Caco-2 (cell line): ENCODE measurements at regions of chr9 and their contacts with region 1.

Region 1: GRCh38 chr9:35657546-35658136 is at the start of gene RMRP:
- DNase-seq: peak; percentile 98 to 100
- H3K4me3 ChIP-seq: peak within 1 kb of the TSS; percentile 95
- H3K4me3 Mint-ChIP-seq: peak within 1 kb of the TSS; percentile 76
- H3K27ac Mint-ChIP-seq: peak within 1 kb of the TSS; percentile 82
- H3K4me1 ChIP-seq: 0 out of 2 replicates have a peak, but pooled peaks cover 5% of the 10 kb centered on the region
- H3K4me1 Mint-ChIP-seq: peaks cover 12% of the 10 kb centered on the region
- H3K27me3 ChIP-seq: no peaks in the 10 kb centered on the region
- H3K27me3 Mint-ChIP-seq: peaks cover 3% of the 10 kb centered on the region
- CTCF ChIP-seq: peak; percentile 15 to 21
- total RNA-seq, gene RMRP: 10,161 and 10,726 TPM in 2 replicates

Region 2: GRCh38 chr9:35603987-35604577 is 53.6 kb before region 1 on chr9:
- CTCF ChIA-PET with region 1: interaction called, 9 read pairs
- POLR2A ChIA-PET with region 1: interaction called, 10 read pairs
- intact Hi-C with region 1: no loop called
- DNase-seq: peak; percentile 99 to 100
- H3K4me3 ChIP-seq: peak overlapping the region; percentile 92
- H3K4me3 Mint-ChIP-seq: peak overlapping the region; percentile 99
- H3K27ac Mint-ChIP-seq: peak overlapping the region; percentile 99
- H3K4me1 ChIP-seq: peaks cover 16% of the 10 kb centered on the region
- H3K4me1 Mint-ChIP-seq: peaks cover 23% of the 10 kb centered on the region
- H3K27me3 ChIP-seq: no peaks in the 10 kb centered on the region
- H3K27me3 Mint-ChIP-seq: no peaks in the 10 kb centered on the region
- CTCF ChIP-seq: peak; percentile 78 to 83

Region 3: DNA sequence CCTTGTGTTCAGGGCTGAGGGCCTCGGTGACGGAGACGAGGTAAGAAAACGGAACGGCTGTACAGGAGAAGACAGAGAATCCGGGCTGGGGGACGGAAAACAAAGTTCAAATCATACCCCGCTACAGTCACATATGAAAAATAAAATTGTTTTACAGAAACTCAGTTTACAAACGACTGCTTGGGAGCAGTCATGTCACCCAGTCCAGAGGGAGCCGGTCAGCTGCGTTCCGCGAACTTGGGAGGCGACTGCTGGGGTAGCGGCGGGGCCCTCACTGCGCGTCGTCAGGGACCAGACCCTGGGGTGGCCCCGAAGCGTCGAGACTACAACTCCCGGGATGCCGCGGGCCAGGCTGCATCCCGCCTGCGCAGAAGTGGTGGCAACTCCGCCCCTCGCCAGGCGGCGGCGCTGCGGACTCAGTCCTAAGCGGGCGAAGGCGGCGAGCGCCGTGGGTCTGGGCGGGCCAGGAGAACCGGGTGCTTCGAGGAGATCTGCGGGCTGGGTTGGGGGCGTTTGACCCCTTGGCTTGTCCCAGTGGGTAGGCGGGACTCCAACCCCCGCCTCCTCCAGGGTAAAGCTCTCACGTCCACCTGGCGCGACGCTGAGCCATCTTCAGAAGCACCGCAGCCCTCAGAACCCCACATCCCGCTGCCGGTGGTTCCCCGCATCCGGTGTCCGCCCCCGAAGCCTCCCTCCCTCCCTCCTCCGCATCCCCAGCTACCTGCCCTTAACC is 10.9 kb before region 1 on chr9:
- CTCF ChIA-PET with region 1: interaction called, 31 read pairs
- POLR2A ChIA-PET with region 1: interaction called, 35 read pairs
- intact Hi-C with region 1: loop called (anchors 1 kb)
- DNase-seq: peak; percentile 90 to 97
- H3K4me3 ChIP-seq: peak overlapping the region; percentile 46
- H3K4me3 Mint-ChIP-seq: peak overlapping the region; percentile 81
- H3K27ac Mint-ChIP-seq: peak overlapping the region; percentile 84
- H3K4me1 ChIP-seq: no peaks in the 10 kb centered on the region; the same call in 1 of the 2 replicates
- H3K4me1 Mint-ChIP-seq: peaks cover 10% of the 10 kb centered on the region
- H3K27me3 ChIP-seq: no peaks in the 10 kb centered on the region
- H3K27me3 Mint-ChIP-seq: no peaks in the 10 kb centered on the region
- CTCF ChIP-seq: peak; percentile 93 to 94

Region 4: DNA sequence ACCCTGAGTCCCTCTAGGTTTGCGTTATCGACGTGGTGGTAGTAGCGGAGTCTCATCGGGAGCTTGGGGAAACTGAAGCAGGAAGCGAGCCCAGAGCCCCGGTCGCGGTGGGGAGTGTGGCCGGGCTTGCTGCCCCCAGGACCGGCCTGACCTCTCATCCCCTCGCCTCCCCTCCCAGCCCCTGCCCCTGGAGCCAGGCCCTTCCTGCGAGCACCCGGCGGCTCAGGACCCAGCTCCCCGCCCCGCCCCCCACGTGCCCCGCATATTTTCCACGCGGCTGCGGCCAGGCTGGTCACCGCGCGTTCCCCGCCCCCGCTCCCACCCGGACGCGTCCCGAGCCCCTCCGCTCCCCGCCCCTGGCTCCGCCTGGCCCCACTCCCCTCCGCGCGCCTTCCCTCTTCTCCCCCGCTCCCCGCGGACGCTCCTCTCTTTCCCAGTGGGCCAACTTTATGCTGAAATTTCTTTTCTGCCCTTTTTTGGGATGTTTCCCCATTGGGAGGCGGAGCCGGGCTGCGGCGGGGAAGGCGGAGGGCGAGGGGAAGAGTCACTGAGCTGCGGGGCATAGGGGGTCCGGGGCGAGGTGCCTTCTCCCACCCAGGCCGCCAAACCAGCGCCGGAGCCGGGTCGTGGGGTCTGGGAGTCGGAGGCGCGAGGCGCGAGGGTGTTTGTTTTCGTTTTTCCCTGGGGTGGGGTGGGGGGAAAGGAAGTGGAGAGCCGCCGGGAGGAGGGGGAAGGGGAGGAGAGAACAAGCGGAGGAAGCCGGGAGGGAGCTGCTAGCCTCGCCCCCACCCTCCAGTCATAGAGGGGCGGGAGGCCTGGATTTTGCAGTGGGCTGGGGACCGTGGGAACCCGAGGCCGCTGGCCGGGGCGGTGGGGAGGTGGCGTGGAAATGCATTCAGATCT is 33.0 kb after region 1 on chr9:
- CTCF ChIA-PET with region 1: interaction called, 19 read pairs
- POLR2A ChIA-PET with region 1: interaction called, 6 read pairs
- intact Hi-C with region 1: loop called (anchors 5 kb)
- DNase-seq: peak; percentile 66 to 68
- H3K4me3 ChIP-seq: peak overlapping the region; percentile 60
- H3K4me3 Mint-ChIP-seq: peak overlapping the region; percentile 80
- H3K27ac Mint-ChIP-seq: peak overlapping the region; percentile 95
- H3K4me1 ChIP-seq: peaks cover 26% of the 10 kb centered on the region
- H3K4me1 Mint-ChIP-seq: peaks cover 8% of the 10 kb centered on the region
- H3K27me3 ChIP-seq: no peaks in the 10 kb centered on the region
- H3K27me3 Mint-ChIP-seq: no peaks in the 10 kb centered on the region
- CTCF ChIP-seq: no peak

Region 5: DNA sequence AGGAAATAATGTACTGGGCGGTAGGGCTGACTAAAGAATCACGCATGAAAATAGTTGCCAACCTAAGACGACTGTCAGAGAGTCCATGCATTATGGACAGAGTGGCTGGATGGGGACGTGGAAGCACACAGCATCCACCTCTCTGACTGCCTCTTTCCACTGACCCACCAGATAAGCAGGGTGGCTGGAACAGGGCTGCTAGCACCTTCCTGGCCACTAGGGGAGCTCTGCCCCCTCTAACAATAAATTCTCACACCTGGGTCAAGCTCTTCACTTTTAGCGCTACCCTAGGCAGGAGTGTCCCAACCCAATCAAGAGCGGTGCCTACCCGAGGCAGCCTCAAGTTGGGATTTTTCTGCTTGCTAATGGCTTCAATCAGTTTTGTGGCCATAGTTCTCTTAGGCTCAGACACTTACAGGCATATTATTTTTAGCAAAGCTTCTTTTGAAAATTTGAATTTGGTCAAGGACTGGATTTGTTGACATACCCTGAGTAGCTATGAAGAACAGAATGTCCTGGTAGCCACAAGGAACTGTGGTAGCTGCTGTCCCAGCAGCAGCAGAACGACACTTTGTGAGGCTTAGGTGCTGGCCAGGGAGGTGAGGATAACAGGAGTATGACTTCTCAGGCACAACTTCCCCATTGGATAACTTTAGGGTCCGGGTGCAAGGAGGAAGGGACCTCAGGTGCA is 39.0 kb after region 1 on chr9:
- CTCF ChIA-PET with region 1: interaction called, 22 read pairs
- POLR2A ChIA-PET with region 1: interaction called, 7 read pairs
- intact Hi-C with region 1: loop called (anchors 5 kb)
- DNase-seq: peak; percentile 68 to 76
- H3K4me3 ChIP-seq: no peak overlapping the region
- H3K4me3 Mint-ChIP-seq: no peak overlapping the region
- H3K27ac Mint-ChIP-seq: no peak overlapping the region
- H3K4me1 ChIP-seq: peaks cover 8% of the 10 kb centered on the region
- H3K4me1 Mint-ChIP-seq: no peaks in the 10 kb centered on the region
- H3K27me3 ChIP-seq: no peaks in the 10 kb centered on the region
- H3K27me3 Mint-ChIP-seq: no peaks in the 10 kb centered on the region
- CTCF ChIP-seq: peak; percentile 70 to 90

Region 6: GRCh38 chr9:36566813-36567221 is 909.2 kb after region 1 on chr9:
- CTCF ChIA-PET with region 1: no interaction called
- POLR2A ChIA-PET with region 1: no interaction called
- intact Hi-C with region 1: no loop called
- DNase-seq: no peak
- H3K4me3 ChIP-seq: no peak overlapping the region
- H3K4me3 Mint-ChIP-seq: no peak overlapping the region
- H3K27ac Mint-ChIP-seq: peak overlapping the region; percentile 19
- H3K4me1 ChIP-seq: no peaks in the 10 kb centered on the region
- H3K4me1 Mint-ChIP-seq: peaks cover 7% of the 10 kb centered on the region
- H3K27me3 ChIP-seq: no peaks in the 10 kb centered on the region
- H3K27me3 Mint-ChIP-seq: no peaks in the 10 kb centered on the region
- CTCF ChIP-seq: no peak